Heart right ventricle (tissue), 16 donors: ENCODE measurements at regions of chr9 and their contacts with region 1.

Region 1: GRCh38 chr9:16247188-16247875 is 623.1 kb downstream of the BNC2 start:
- DNase-seq: no peak
- ATAC-seq: peak in 3 of 8 donors; percentile 55 to 80 (median 57)
- H3K4me3 ChIP-seq: no peak overlapping the region
- H3K27ac ChIP-seq: peak overlapping the region in 1 of 10 donors; percentile 59
- H3K4me1 ChIP-seq: peaks cover 0 to 15% (median 10%) of the 10 kb centered on the region in 9 donors
- H3K27me3 ChIP-seq: no peaks in the 10 kb centered on the region
- CTCF ChIP-seq: no peak

Region 2: DNA sequence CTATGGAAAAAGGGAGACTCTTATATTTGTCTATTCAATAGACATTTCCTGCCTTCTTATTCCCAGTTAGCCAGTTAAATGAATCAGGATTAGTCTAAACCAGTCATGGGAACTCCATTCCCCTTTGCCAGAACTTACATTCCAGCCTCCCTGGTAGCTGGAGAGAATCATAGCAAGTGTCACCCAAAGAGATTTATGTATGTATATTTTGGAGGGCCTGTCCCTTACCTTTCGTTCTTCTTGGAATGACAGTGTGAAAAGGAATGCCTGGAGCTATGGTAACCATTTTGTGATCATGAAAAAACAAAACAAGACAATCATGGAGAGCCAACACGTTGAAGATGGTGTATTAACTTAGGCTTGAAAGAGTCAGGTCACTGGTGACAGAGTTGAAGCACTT is 66.8 kb before region 1 on chr9:
- intact Hi-C with region 1: loop called in 1 of 10 experiments (anchors 10 kb)
- DNase-seq: no peak
- ATAC-seq: peak in 1 of 8 donors; percentile 29
- H3K4me3 ChIP-seq: no peak overlapping the region
- H3K27ac ChIP-seq: no peak overlapping the region
- H3K4me1 ChIP-seq: peaks cover 0 to 17% (median 0%) of the 10 kb centered on the region in 9 donors
- H3K27me3 ChIP-seq: no peaks in the 10 kb centered on the region
- CTCF ChIP-seq: no peak

Region 3: GRCh38 chr9:16640649-16641048 is 393.3 kb after region 1 on chr9:
- intact Hi-C with region 1: no loop called
- DNase-seq: no peak
- ATAC-seq: no peak
- H3K4me3 ChIP-seq: no peak overlapping the region
- H3K27ac ChIP-seq: no peak overlapping the region
- H3K4me1 ChIP-seq: no peaks in the 10 kb centered on the region
- H3K27me3 ChIP-seq: no peaks in the 10 kb centered on the region
- CTCF ChIP-seq: peak in 1 of 9 donors; percentile 11